ENCODE measurements at regions of chr9 and their contacts with region 1.

Region 1: DNA sequence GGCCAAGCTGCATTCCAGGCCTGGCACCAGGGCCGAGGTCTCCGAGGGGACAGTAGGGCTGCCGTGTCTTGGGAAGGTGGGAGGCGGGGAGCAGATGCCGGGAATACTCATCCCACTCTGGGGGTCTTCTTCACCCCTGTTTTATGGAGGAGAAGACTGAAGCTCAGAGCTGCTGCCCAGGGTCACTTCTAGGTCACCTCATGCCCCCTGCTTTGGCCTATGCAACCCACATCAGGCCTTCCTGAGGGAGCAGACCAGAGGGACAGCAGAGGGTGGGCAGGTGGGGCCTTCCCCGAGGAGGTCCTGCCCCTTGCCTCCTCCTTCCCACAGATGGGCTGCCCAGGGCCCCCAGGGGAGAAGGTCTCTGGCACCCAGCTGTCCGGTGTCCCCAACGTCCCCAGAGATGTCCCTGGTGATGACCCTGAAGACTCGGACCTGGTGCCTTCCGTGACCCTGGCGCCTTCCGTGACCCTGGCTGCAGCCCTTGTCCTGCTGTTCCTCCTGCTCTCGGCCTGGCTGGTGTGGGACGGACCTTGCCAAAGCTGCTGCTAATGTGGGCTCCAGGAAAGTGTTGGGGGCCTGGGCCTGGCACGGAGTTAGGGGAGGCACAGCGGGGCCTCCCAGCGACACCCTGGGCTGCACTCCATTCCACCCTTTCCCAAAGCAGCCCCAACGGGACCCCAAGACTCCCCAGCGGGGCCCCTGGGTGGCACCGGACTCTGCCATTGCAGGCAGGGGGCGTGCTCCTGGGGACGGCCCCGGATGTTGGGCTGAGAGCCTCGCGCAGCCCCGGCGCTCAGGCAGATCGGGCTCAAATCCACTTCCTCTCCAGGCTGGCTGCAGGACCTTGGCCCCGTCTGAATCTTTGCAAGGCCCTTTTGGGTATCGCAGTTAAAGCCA is 6.7 kb upstream of the SLC2A6 start:
- DNase-seq: peak; percentile 64
- ATAC-seq: peak; percentile 2
- H3K4me3 ChIP-seq: no peak overlapping the region
- H3K27ac ChIP-seq: no peak overlapping the region
- H3K4me1 ChIP-seq: peaks cover 4% of the 10 kb centered on the region
- H3K27me3 ChIP-seq: no peaks in the 10 kb centered on the region
- CTCF ChIP-seq: no peak

Region 2: DNA sequence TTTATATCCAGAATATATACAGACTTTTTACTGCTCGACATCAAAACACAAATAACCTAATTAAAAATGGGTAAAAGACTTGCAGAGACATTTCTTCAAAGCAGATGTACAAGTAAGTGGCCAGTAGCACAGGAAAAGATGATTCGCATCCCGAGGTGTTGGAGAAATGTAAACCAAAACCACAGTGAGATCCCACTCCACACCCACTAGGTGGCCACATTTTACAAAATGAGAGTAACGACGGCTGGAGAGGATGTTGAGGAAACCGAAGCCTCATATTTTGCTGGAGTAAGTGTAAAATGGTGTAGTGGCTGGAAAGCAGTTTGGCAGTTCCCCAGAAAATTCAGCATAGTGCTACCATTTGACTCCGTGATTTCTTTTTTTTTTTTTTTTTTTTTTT is 300.6 kb before region 1 on chr9:
- intact Hi-C with region 1: loop called (anchors 10 kb)
- DNase-seq: no peak
- ATAC-seq: peak; percentile 75
- H3K4me3 ChIP-seq: no peak overlapping the region
- H3K27ac ChIP-seq: no peak overlapping the region
- H3K4me1 ChIP-seq: peaks cover 5% of the 10 kb centered on the region
- H3K27me3 ChIP-seq: peaks cover 19% of the 10 kb centered on the region
- CTCF ChIP-seq: peak; percentile 56

Region 3: DNA sequence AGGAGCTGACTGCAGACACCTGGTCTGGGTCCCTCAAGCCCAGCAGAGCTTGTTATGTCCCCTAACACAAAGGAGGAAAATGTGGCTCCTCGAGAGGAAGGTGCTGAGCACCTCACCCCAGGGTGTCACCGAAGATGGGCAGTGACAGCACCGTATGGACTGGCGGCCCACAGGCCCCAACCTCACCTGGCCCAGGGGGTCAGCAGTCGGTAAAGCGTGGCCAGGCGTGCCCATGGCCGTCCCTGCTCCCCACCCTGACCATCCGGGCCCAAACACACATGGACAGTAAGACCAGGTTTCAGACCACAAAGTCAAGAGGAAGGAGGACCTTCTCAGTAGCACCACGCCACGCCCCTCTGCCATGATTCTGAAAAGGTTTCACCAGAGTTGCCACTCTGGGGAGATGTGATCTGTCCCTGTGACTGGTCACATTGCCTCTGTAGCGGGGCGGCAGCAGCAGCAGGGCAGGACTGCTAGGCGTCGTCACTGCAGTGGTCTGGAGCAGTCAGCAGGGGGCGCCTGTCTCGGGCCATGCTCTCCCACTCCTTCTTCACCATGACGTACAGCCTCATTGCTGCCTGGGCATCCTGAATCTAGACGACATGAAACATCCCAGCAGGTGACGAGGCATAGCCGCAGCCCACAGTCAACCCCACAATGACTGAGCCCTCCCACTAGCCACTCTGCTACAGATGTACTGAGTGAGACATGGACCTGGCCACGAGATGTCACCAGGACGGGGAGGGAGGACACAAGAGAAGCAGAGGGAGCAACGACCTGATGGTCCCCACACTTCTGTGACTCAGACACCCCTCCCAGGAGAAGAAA is 78.9 kb before region 1 on chr9:
- intact Hi-C with region 1: loop called (anchors 5 kb)
- DNase-seq: peak; percentile 89
- ATAC-seq: peak; percentile 92
- H3K4me3 ChIP-seq: no peak overlapping the region
- H3K27ac ChIP-seq: no peak overlapping the region
- H3K4me1 ChIP-seq: no peaks in the 10 kb centered on the region
- H3K27me3 ChIP-seq: no peaks in the 10 kb centered on the region
- CTCF ChIP-seq: peak; percentile 93

Region 4: DNA sequence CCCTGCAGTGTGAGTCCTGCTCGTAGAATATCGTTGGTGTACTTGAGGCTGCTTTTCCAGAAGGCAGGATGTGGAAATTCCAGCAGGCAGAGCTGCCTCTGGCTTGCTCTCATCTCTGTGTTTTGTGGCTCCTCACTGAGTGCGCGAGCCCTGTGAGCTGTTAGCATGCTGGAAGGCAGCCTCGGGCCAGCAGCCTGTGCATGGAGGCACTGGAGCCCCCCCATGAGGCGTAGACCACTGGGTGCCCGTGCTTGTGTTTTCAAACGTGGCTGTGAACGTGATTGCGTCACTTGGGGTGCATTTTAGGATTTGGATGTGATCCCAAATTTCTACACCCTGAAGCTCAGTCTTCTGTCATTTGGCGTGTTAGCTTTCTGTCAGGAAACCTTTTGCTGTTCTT is 653.5 kb after region 1 on chr9:
- intact Hi-C with region 1: no loop called
- DNase-seq: no peak
- ATAC-seq: no peak
- H3K4me3 ChIP-seq: no peak overlapping the region
- H3K27ac ChIP-seq: no peak overlapping the region
- H3K4me1 ChIP-seq: peaks cover 33% of the 10 kb centered on the region
- H3K27me3 ChIP-seq: no peaks in the 10 kb centered on the region
- CTCF ChIP-seq: no peak

Measured in upper lobe of right lung (tissue), 1 donor.